ENCODE measurements at regions of chr15 and their contacts with region 1.

Region 1: DNA sequence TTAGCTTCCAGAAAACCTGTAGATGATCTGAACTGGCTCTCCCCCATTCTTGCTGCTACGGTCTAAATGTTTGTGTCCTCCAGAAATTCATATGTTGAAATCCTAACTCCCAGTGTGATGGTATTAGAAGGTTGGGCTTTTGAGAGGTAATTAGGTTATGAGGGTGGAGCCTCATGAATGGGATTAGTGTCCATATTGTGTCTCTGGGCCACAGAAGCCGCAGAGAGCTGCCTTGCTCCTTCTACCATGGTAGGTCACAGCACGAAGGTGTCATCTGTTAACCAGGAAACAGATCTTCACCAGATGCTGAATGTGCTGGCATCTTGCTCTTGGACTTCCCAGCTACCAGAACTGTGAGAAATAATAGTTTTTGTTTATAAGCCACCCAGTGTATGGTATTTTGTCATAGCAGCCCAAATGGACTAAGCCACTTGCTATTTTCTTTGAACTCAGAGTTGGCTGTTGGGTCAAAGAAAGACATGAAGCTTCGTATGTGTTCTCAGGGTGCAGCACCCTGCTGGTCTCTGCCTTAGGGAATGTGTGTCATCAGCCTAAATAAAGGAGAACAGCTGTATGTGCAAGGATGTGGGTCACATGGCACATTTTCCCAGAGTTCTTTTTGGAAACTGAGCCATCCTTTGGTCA is 317.5 kb upstream of the SLCO3A1 start:
- DNase-seq: no peak
- H3K4me3 Mint-ChIP-seq: peak overlapping the region; percentile 37
- H3K27ac Mint-ChIP-seq: peak overlapping the region; percentile 91
- H3K4me1 Mint-ChIP-seq: peaks cover 75% of the 10 kb centered on the region
- H3K27me3 Mint-ChIP-seq: no peaks in the 10 kb centered on the region
- CTCF ChIP-seq: no peak

Region 2: DNA sequence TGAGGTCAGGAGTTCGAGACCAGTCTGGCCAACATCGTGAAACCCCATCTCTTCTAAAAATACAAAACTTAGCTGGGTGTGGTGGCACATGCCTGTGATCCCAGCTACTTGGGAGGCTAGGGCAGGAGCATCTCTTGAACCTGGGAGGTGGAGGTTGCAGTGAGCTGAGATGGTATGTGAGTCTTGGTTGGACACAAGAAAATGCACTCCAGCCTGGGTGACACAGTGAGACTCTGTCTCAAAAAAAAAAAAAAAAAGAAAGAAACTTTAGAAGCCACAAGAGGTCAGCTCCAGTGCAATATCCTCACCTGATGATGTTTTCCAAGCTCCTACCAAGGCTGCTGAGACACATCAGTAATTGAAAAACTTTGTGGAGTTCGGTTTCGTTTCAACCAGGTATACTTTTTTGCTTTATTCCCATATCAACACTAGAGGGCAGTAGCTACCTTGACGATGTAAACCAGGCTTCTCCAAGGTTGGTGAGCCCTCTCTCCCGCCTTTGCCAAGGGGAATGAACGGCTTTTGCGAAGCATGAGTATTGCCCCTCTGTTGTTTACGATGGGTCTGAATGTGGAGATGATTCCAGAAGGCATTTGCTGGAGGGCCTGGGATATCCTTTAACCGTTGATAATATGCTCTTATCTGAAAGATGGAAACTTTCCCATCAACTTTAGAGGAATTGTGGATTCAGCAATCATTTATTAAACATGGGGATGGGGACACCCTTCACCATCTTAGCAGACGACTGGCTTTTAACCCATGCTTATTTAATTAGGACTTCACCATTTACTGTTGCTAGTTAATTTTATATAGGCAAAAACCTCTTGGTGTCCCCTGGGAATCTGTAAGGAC is 233.2 kb before region 1 on chr15:
- CTCF ChIA-PET with region 1: interaction called, 3 read pairs
- intact Hi-C with region 1: loop called (anchors 5 kb)
- DNase-seq: peak; percentile 56
- H3K4me3 Mint-ChIP-seq: no peak overlapping the region
- H3K27ac Mint-ChIP-seq: no peak overlapping the region
- H3K4me1 Mint-ChIP-seq: no peaks in the 10 kb centered on the region
- H3K27me3 Mint-ChIP-seq: peaks cover 24% of the 10 kb centered on the region
- CTCF ChIP-seq: peak; percentile 68

Region 3: DNA sequence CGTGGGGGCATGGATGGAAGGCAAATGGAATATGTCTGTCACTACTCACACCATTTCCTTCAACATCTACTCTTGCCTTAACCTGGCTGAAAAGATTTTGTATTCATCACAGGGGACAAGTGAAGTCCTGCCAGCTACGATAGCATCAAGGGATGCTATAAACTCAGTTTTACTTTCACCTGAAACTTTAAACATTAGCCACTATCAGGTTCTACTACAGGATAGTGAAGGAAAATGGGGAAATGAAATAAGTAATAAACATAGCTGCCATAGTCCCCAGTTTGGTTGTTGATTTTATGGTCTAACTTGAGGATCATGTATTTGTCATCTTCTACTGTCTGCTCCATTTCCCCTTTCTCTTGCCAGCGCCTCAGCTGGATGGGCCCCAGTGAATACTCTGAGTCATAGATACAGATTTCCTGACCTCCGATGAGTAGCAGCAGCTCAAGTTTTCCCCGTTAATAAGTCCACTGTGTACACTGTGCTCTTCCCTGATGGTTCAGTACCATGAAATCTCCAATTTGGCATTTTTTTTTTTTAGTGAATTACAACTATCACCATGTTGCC is 20.7 kb before region 1 on chr15:
- CTCF ChIA-PET with region 1: interaction called, 11 read pairs
- intact Hi-C with region 1: no loop called
- DNase-seq: peak; percentile 51
- H3K4me3 Mint-ChIP-seq: no peak overlapping the region
- H3K27ac Mint-ChIP-seq: no peak overlapping the region
- H3K4me1 Mint-ChIP-seq: peaks cover 39% of the 10 kb centered on the region
- H3K27me3 Mint-ChIP-seq: no peaks in the 10 kb centered on the region
- CTCF ChIP-seq: no peak

Region 4: GRCh38 chr15:91706322-91707032 is 170.5 kb after region 1 on chr15:
- CTCF ChIA-PET with region 1: interaction called, 13 read pairs
- intact Hi-C with region 1: loop called (anchors 2 kb)
- DNase-seq: peak; percentile 85
- H3K4me3 Mint-ChIP-seq: no peak overlapping the region
- H3K27ac Mint-ChIP-seq: no peak overlapping the region
- H3K4me1 Mint-ChIP-seq: no peaks in the 10 kb centered on the region
- H3K27me3 Mint-ChIP-seq: no peaks in the 10 kb centered on the region
- CTCF ChIP-seq: peak; percentile 87

Region 5: DNA sequence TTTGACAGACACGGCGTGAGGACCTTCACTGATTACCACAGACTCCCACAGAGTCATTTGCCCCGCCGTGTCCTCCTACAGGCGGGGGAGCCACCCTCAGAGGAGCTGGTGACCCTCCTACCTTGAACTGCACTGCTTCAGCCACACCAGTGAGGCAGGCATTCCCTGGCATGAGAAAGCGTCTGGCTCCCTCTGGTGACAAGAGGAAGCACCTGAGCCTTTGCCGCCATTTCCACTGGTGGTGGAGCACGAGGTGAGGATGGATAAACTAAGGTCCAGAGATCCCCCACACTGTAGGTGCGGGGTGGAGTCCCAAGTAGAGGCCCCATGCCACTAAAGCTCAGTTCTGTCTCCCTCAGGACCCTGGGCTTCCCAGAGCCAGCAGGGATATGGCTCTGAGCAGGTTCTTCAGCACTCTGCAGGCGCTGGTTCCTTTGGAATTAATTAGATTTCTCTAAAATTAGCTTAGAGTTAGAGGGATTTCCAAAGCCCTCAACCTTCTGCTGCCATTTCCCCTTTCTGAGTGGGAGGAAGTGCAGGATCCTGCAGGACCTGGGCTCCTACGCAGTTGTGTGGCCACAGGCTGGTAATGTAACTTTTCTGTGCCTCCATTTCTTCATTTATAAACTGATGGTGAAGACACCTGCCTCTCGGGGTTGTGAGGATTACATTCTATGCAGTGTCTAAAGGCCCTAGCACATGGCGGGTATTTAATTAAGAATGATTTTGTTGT is 541.5 kb after region 1 on chr15:
- CTCF ChIA-PET with region 1: no interaction called
- intact Hi-C with region 1: loop called (anchors 5 kb)
- DNase-seq: peak; percentile 83
- H3K4me3 Mint-ChIP-seq: no peak overlapping the region
- H3K27ac Mint-ChIP-seq: no peak overlapping the region
- H3K4me1 Mint-ChIP-seq: peaks cover 35% of the 10 kb centered on the region
- H3K27me3 Mint-ChIP-seq: no peaks in the 10 kb centered on the region
- CTCF ChIP-seq: peak; percentile 77